Mammary epithelial cell (primary cell): ENCODE measurements at regions of chr2 and their contacts with region 1.

Region 1: DNA sequence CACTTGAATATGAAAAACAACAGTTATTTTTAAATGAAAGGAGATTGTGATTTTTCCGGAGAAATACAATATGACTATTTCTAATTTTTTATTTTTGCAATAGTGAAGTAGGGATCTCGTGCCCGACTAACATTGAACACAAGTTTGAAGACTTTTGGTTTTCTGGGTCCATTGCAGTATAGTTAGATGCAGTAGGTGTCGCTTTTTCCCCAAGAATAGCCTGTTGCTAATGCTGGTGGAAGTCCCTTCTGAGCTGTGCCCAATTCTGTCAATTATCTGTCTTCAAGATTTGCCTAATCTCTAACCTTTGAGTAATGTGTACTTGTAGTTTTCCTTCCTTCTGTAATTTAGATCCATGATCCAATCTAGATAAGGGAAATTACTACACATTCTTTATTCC is 36.5 kb downstream of the SEMA4F start:
- DNase-seq: peak; percentile 61
- H3K4me3 ChIP-seq: no peak overlapping the region
- H3K27ac ChIP-seq: no peak overlapping the region
- H3K4me1 ChIP-seq: peaks cover 27% of the 10 kb centered on the region
- H3K27me3 ChIP-seq: no peaks in the 10 kb centered on the region
- CTCF ChIP-seq: peak; percentile 86 to 88

Region 2: GRCh38 chr2:74747341-74748188 is 57.0 kb after region 1 on chr2:
- CTCF ChIA-PET with region 1: no interaction called
- dilution Hi-C with region 1: loop called (anchors 5 kb)
- in situ Hi-C with region 1: no loop called
- intact Hi-C with region 1: no loop called
- DNase-seq: peak; percentile 38
- H3K4me3 ChIP-seq: no peak overlapping the region
- H3K27ac ChIP-seq: peak overlapping the region; percentile 49
- H3K4me1 ChIP-seq: peaks cover 26% of the 10 kb centered on the region
- H3K27me3 ChIP-seq: no peaks in the 10 kb centered on the region
- CTCF ChIP-seq: no peak

Region 3: GRCh38 chr2:74876081-74876886 is 185.7 kb after region 1 on chr2:
- CTCF ChIA-PET with region 1: no interaction called
- dilution Hi-C with region 1: no loop called
- in situ Hi-C with region 1: no loop called
- intact Hi-C with region 1: loop called (anchors 1 kb)
- DNase-seq: no peak
- H3K4me3 ChIP-seq: no peak overlapping the region
- H3K27ac ChIP-seq: no peak overlapping the region
- H3K4me1 ChIP-seq: no peaks in the 10 kb centered on the region
- H3K27me3 ChIP-seq: no peaks in the 10 kb centered on the region
- CTCF ChIP-seq: peak; percentile 21 to 48

Region 4: DNA sequence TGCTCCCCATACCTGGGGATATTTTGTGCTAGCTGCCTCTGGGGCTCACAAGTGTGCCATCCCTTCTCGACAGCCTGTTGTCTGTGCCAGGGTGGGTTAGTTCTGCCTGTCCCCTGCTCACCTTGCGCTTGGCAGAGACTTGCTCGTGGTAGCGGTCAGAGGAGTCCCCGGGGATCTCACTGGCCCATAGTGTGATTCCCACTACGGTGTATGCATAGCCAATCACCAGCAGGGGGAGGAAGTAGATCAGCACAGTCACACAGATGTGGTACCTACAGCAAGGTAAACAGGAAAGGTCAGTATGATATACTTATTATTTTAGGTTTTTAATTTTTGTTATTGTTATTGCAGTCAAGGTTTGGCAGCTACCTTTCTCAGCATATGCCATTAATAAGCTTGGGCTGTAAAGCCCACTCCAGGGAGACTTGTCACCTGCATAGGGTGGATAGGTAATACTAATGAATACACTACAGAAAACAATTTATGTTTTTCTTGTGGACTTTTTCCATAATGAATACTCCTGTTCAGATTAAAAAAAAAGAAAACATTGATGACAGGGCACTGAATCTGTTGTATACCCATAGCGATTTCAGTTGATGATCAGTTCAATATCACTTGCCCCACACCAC is 363.0 kb after region 1 on chr2:
- CTCF ChIA-PET with region 1: no interaction called
- dilution Hi-C with region 1: no loop called
- in situ Hi-C with region 1: no loop called
- intact Hi-C with region 1: loop called (anchors 2 kb)
- DNase-seq: peak; percentile 24
- H3K4me3 ChIP-seq: no peak overlapping the region
- H3K27ac ChIP-seq: no peak overlapping the region
- H3K4me1 ChIP-seq: no peaks in the 10 kb centered on the region
- H3K27me3 ChIP-seq: no peaks in the 10 kb centered on the region
- CTCF ChIP-seq: peak; percentile 76 to 90

Region 5: DNA sequence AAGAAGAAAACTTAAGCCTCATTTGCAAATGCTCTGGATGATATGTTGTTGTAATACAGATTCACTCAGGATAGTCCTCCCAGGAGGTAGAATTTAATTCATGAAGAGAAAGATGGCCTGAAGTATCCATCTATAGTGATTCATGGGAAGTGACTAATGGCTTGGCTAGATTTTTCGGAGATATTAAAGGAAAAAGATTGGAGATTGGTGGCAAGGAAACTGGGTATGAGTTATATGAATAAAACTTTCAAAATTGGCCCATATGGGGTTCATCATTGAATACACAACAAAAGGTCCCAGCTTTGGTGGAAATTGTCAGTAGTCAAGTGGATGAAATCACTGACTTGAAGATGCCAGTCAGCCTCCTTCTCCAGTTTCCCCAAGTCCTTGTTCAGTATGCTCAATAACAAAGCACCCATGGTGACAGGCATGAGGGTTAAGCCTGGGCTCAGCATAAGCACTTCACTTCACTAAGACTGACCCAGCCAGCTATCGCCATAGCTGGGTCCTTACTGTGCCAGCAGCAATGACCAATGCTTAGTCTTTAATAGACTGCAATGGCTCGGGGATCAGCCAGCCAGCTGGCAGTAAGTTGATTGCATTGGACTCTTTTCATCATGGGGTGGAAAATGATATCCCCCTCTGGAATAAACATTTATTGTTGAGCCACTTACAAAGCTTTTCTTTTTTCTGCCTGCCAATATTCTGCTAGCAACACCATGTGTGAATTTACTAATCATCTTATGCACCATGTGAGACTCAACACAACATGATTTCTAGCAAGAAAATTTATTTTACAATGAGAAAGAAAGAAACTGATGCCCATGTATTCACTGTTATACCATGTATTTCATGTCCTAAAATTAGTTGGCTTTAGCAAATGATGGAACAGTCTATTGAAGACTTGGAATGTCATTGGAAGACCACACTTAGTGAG is 685.3 kb after region 1 on chr2:
- CTCF ChIA-PET with region 1: no interaction called
- dilution Hi-C with region 1: no loop called
- in situ Hi-C with region 1: loop called in 1 of 2 experiments (anchors 25 kb)
- intact Hi-C with region 1: no loop called
- DNase-seq: peak; percentile 51
- H3K4me3 ChIP-seq: no peak overlapping the region
- H3K27ac ChIP-seq: no peak overlapping the region
- H3K4me1 ChIP-seq: peaks cover 26% of the 10 kb centered on the region
- H3K27me3 ChIP-seq: no peaks in the 10 kb centered on the region
- CTCF ChIP-seq: no peak